Gastrocnemius medialis (tissue), 4 donors: ENCODE measurements at regions of chr1 and their contacts with region 1.

Region 1: DNA sequence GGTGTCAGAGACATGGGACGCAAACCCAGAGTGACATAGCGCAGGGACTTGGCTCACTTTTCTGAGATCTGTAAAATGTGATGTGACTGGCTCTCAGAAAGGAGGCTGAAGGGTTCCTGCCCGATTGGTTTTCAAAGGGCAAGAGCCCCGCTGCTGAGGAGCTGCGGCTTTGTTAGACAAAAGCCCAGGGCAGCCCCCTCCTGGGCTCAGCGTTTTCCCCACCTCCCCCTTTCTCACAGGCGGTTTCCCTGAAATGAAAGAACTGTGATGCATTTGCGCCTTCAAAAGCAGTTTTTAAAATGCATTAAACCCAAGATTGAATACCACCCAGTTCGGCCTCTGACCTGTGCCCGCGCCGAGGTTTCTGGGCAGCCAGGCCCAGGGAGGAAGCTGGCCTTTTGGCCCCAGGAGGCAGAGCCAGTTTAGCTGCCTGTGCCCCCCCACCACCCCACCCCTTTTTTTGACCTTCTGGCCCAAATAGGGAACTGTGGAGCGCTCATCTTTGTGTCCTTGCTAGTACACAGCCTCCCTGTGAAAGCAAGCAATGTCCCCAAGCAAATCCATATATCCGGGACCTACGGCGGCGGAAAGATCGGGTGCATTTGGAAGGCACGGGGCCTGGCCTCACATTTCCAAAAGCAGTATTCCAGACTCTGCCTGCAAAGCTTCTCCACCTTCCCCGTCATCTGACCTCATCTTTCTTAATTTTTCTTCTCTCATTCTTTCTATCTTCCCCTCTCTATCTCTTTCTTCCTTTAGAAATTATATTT is 28.6 kb downstream of the CD247 start:
- DNase-seq: no peak
- ATAC-seq: no peak
- H3K4me3 ChIP-seq: no peak overlapping the region
- H3K27ac ChIP-seq: no peak overlapping the region
- H3K4me1 ChIP-seq: no peaks in the 10 kb centered on the region
- H3K27me3 ChIP-seq: no peaks in the 10 kb centered on the region
- CTCF ChIP-seq: no peak
- POLR2A ChIP-seq: no peak

Region 2: DNA sequence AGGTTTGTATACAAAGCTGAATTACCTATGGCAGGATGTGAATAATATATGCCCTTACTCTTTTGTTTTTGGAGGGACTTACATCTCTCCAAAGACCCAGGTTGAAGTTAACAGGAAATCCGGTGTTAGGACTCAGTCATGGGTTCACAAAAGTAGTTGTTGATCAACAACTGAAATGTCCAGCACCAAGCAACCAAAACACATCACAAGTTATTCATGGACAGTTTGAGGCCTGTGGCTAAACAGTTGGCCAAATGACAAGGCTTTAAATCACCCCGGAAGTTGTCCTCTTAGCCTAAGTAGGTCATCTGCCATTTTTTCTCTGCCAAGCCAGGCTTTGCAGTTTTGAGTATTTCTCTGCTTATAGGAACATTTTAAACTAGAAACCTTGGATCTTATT is 61.4 kb before region 1 on chr1:
- in situ Hi-C with region 1: loop called in 1 of 4 experiments (anchors 10 kb)
- intact Hi-C with region 1: no loop called
- DNase-seq: no peak
- ATAC-seq: peak; percentile 75 to 76
- H3K4me3 ChIP-seq: no peak overlapping the region
- H3K27ac ChIP-seq: peak overlapping the region; percentile 11 to 48 (median 30)
- H3K4me1 ChIP-seq: peaks cover 0 to 9% of the 10 kb centered on the region in 2 donors
- H3K27me3 ChIP-seq: no peaks in the 10 kb centered on the region
- CTCF ChIP-seq: no peak
- POLR2A ChIP-seq: no peak

Region 3: GRCh38 chr1:167454894-167455785 is 34.6 kb before region 1 on chr1:
- in situ Hi-C with region 1: no loop called
- intact Hi-C with region 1: no loop called
- DNase-seq: peak; percentile 66 to 67
- ATAC-seq: peak; percentile 79 to 80
- H3K4me3 ChIP-seq: peak overlapping the region; percentile 72 to 94 (median 76)
- H3K27ac ChIP-seq: peak overlapping the region; percentile 81 to 93 (median 86)
- H3K4me1 ChIP-seq: no peaks in the 10 kb centered on the region
- H3K27me3 ChIP-seq: no peaks in the 10 kb centered on the region
- CTCF ChIP-seq: no peak
- POLR2A ChIP-seq: peak; percentile 31 to 56